Activated CD4-positive, alpha-beta memory T cell treated with anti-CD3 and anti-CD28 coated beads, Interleukin-2, amount 10 ng/mL, durations not matched to agents 7 days and 5 days (primary cell): ENCODE measurements at regions of chr11 and their contacts with region 1.

Region 1: DNA sequence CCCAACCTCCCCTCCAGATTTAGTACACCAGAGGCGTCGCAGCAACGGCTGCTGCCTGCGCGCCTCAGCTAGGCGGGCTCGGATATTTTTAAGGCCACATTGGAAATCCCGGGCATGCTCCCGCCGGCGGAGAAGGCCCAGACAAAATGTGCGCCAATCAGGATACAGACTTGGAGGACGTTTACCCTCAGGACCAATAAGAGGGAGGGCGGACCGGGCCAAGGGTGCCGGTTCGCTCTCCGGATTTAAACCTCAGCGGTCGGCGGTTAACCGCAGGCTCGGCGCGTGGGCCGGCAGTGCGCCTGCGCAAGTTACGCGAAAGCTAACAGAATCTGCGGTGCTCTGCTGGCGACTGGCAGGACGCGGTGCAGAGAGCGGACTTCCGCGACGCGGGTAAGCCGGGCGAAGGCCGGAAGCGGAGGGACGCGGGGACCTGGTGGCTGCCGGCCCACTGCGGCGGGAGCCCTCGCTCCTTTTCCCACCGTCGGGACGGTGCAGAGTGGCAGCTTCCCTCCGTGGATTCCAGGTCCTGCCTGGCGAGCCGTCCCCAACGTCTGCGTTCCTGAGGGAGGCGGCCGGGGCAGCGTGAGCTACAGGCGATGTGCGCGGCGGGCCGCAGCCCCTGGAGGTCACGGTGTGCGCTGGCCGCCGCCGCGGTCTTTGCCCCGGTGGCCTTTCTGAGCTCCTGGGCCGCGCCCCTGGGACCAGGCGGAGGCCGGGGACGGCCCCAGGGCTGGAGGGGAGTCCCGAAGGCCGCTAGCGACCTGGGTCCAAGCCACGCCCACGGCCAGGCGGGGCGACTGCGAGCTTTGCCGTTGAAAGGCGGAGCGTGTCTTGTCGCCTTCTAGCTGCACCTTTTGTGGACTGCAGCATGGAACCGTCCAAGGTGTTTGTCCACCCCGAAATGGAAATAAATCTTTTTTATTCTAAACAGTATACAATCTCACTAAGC is at the start of gene HYLS1:
- DNase-seq: peak; percentile 99
- H3K4me3 Mint-ChIP-seq: peak within 1 kb of the TSS; percentile 82
- H3K27ac Mint-ChIP-seq: peak within 1 kb of the TSS; percentile 96
- H3K4me1 Mint-ChIP-seq: peaks cover 42% of the 10 kb centered on the region
- H3K27me3 Mint-ChIP-seq: no peaks in the 10 kb centered on the region
- total RNA-seq, gene HYLS1: 14.0 to 15.5 TPM

Region 2: GRCh38 chr11:125568970-125569914 is 318.4 kb before region 1 on chr11 and contains the start of gene EI24:
- CTCF ChIA-PET with region 1: interaction called, 8 read pairs
- POLR2A ChIA-PET with region 1: interaction called, 37 read pairs
- DNase-seq: peak; percentile 90
- H3K4me3 Mint-ChIP-seq: peak within 1 kb of the TSS; percentile 95
- H3K27ac Mint-ChIP-seq: peak within 1 kb of the TSS; percentile 80
- H3K4me1 Mint-ChIP-seq: peaks cover 27% of the 10 kb centered on the region
- H3K27me3 Mint-ChIP-seq: no peaks in the 10 kb centered on the region
- total RNA-seq, gene EI24: 31.5 to 33.2 TPM

Region 3: GRCh38 chr11:125625630-125626287 is 261.9 kb before region 1 on chr11:
- CTCF ChIA-PET with region 1: interaction called, 6 read pairs
- POLR2A ChIA-PET with region 1: interaction called, 28 read pairs
- DNase-seq: peak; percentile 89
- H3K4me3 Mint-ChIP-seq: peak overlapping the region; percentile 98
- H3K27ac Mint-ChIP-seq: peak overlapping the region; percentile 92
- H3K4me1 Mint-ChIP-seq: peaks cover 37% of the 10 kb centered on the region
- H3K27me3 Mint-ChIP-seq: no peaks in the 10 kb centered on the region

Region 4: DNA sequence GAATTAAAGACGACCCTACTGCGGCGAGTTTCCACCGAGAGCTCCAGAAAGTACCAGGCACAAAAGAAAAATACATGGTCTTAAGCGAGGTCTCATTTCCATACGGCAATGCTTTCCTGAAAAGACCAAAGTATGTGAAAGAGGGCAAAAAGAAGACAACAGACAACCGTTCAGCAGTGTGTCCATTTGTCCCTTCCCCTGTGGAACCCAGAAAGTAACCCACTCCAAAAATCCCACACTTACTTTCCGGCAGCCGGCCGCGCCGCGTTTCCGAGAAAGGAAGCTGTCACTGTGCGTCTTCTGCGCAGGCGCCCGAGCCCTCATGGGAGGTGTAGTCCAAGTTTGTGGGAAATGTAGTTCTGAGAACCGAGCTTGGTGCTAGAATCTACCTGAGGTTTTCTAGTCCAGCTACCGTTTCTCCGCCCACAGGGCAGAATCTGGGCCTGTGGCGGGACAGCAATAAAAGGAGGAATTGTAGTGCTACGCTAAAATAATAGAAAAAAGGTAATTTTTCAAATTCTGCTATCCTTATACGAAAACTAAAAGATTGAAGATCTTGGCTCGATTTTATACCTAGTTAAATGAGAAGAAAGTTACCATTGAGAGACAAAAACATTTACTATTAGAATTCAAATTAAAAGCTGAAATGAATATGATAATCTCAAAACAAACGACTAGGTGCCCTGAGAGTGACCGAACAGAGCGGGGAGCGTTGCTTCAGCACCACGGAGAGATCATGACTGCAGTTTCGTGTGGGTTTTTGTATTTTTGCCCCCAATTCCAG is 15.5 kb after region 1 on chr11 and contains the start of gene PUS3:
- CTCF ChIA-PET with region 1: interaction called, 26 read pairs
- POLR2A ChIA-PET with region 1: interaction called, 68 read pairs
- DNase-seq: peak; percentile 89
- H3K4me3 Mint-ChIP-seq: peak within 1 kb of the TSS; percentile 96
- H3K27ac Mint-ChIP-seq: peak within 1 kb of the TSS; percentile 85
- H3K4me1 Mint-ChIP-seq: peaks cover 29% of the 10 kb centered on the region
- H3K27me3 Mint-ChIP-seq: peaks cover 33% of the 10 kb centered on the region
- total RNA-seq, gene PUS3: 7.8 to 11.5 TPM

Region 5: GRCh38 chr11:126211235-126212088 is 323.8 kb after region 1 on chr11 and contains the starts of genes FAM118B and RPUSD4:
- CTCF ChIA-PET with region 1: no interaction called
- POLR2A ChIA-PET with region 1: interaction called, 14 read pairs
- DNase-seq: peak; percentile 99
- H3K4me3 Mint-ChIP-seq: peak within 1 kb of the TSS; percentile 98
- H3K27ac Mint-ChIP-seq: peak within 1 kb of the TSS; percentile 84
- H3K4me1 Mint-ChIP-seq: peaks cover 43% of the 10 kb centered on the region
- H3K27me3 Mint-ChIP-seq: peaks cover 7% of the 10 kb centered on the region
- total RNA-seq, gene FAM118B: 9.0 to 9.9 TPM
- total RNA-seq, gene RPUSD4: 26.5 to 26.8 TPM